AG04450 (cell line): ENCODE measurements at regions of chr3 and their contacts with region 1.

Region 1: DNA sequence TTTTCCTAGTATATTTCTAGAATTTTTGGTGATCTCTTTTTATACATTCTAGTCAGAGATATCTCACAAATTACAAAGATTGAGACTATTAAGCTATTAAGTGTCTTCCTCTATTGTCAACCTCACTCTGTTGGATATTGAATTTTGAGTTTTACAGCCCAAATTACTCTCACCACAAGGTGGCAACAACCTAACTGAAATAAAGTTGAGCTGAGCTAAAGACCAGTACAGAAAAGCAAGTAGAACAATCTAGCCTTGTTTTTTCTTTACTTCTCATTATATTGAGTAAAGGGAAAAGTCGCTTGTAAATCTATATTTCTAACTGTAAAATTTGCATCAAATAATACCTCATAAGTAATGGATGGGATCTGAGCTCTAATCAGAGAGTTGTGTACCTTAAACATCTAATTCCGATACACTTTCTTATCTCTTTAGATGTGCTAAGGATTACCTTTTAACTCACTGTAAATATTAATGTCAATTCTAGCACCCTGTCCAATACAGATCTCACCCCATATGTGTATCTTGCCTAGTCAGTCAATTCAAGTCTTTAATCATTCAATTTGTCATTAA is 13.6 kb upstream of the COMMD2 start:
- DNase-seq: no peak
- H3K4me3 ChIP-seq: no peak overlapping the region
- H3K27ac ChIP-seq: no peak overlapping the region
- H3K27me3 ChIP-seq: peaks cover 19% of the 10 kb centered on the region
- CTCF ChIP-seq: peak; percentile 68

Region 2: DNA sequence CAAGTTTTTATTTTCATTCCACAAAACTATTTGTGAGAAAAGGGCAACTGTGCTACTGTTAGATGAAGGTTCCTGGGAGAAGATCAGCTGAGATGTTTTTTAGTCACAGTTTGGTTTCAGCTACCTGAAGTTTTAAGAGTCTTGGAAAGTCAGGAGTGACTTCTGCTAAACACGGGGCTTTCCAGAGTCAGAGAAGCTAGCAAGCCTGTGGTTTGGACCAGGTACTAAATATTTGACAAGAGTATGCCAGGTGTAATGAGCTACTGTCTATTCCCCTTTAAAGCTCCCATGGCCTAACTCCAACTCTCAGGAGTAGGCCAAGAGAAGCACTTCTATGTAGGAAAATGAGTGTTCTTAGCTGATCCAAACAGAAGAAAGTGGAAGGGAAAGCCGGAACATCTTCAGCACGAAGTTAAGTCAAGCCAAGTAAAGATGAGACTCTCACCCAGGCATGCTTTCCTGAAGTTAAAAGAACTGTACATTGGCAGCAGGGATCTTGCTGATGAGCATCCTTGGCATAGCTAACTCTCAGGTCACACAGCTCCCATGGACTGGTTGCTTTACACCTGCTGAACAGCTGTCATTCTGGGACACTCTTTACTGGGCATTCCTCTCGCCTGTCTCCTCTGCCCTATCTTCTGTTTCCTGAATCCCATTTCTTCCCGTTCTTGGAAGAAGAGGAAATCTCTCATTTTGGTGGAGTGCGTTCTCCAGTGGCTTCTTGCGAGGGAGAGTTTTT is 454.9 kb before region 1 on chr3:
- CTCF ChIA-PET with region 1: no interaction called
- POLR2A ChIA-PET with region 1: no interaction called
- DNase-seq: no peak
- H3K4me3 ChIP-seq: no peak overlapping the region
- H3K27ac ChIP-seq: no peak overlapping the region
- H3K27me3 ChIP-seq: no peaks in the 10 kb centered on the region
- CTCF ChIP-seq: no peak

Region 3: DNA sequence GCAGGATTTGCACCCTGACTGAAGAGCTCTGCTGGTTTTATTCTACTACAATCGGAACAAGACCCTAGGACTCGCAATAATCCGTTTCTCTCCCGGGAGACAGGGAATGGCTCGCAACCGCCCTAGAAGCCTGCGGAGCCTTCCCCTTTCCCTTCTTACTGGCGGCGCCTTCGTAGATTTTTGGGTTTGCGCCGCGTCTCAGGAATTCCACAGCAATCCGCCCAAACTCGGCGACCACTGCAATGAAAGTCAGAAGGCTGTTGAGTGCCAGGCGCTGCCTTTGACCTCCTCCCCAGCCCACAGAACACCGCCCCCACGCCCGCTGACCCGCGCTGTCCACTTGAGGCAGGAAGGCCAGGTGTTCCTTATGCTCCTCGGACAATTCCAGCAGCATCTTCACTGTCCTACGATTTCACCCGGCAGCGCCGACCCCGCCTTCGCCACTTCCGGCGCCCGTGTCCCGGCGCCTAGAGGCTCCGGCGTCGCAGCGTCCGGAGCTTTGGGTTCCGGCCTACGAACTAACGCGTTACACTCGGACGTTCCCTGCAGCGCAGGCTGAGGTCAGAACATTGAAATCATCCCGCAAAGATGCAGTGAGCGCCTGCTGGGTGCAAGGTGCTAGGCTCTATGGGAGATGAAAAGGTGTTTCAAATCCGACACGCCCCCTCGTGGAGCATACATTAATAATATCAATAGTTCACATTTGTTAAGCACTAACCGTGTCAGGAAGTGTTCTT is 13.6 kb before region 1 on chr3 and contains the start of gene COMMD2:
- CTCF ChIA-PET with region 1: interaction called, 25 read pairs
- POLR2A ChIA-PET with region 1: no interaction called
- DNase-seq: peak; percentile 52
- H3K4me3 ChIP-seq: peak within 1 kb of the TSS; percentile 93
- H3K27ac ChIP-seq: peak within 1 kb of the TSS; percentile 58
- H3K27me3 ChIP-seq: peaks cover 4% of the 10 kb centered on the region
- CTCF ChIP-seq: peak; percentile 27
- polyA plus RNA-seq, gene COMMD2: 43.5 and 56.0 TPM in 2 replicates

Region 4: DNA sequence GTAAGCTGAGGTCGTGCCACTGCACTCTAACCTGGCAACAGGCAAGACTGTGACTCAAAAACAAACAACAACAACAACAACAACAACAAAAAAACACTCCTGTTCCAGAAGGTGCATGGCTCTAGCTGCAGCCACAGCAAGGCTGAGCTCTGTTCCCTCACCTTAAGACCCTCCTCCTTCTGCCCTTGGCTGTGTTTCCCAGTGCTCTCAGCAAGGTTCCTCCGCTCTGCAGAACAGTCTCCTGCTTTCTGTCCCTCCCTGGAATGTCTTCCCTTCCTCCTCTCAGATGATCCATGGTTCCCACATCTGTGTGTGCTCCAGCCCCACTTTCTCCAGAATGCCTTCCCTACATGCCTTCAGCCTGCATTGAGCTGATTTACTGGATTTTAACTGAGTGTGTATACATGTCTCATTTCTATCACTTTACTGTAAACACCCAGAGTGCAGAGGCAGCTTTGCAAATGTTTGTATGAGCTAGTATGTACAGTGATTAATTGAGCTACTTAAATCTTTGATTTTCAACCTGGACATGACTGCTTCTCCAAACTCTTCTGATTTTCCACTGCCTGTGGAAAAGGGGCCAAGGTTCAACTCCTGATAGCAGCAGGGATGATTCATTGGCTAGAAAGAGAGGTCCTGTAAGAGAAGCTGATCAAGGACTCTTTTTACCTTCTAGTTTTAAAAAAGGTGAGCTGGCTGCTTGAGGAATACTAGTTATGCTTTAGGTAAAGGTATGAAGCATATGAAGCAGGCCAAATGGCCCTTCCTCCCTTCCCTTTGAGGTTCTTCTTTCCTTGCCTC is 11.8 kb after region 1 on chr3:
- CTCF ChIA-PET with region 1: interaction called, 61 read pairs
- POLR2A ChIA-PET with region 1: no interaction called
- DNase-seq: no peak
- H3K4me3 ChIP-seq: no peak overlapping the region
- H3K27ac ChIP-seq: no peak overlapping the region
- H3K27me3 ChIP-seq: no peaks in the 10 kb centered on the region
- CTCF ChIP-seq: no peak

Region 5: GRCh38 chr3:149783576-149783975 is 17.7 kb after region 1 on chr3:
- CTCF ChIA-PET with region 1: interaction called, 61 read pairs
- POLR2A ChIA-PET with region 1: interaction called, 3 read pairs
- DNase-seq: peak; percentile 72
- H3K4me3 ChIP-seq: no peak overlapping the region
- H3K27ac ChIP-seq: no peak overlapping the region
- H3K27me3 ChIP-seq: no peaks in the 10 kb centered on the region
- CTCF ChIP-seq: no peak